A673 (cell line): ENCODE measurements at regions of chr1 and their contacts with region 1.

Region 1: DNA sequence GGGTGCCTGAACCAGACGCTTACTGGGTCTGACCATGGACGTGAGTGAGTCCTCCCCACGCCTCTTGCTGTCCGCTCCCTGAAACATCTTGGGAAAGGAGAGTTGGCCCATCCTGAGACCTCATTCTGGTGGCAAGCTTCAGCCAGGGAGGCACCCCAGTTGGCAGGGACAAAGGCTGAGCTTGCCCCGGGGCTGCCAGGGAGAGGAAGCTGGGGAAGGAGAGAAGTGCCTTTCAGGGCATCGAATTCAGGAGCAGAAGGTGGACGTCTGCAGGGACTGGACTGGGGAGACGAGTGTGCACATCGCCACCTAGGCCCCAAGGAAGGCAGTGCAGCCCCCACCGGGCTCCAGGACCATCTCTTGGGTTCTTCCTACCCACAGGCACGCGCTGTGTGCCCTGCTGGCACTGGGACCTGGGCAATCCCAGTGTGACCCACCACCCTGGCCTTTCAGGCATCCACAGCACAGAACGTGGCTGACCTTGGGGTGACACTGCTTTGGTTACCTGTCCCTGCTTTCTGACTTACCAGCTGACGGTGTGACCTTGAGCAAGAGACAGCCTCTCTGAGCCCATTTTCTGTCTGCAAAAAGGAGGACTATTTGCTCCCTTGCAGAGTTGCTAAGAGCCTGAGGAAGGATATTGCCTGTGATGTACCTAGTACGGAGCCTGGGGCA is 133.0 kb upstream of the WNT4 start:
- DNase-seq: peak; percentile 55
- H3K4me3 ChIP-seq: no peak overlapping the region
- H3K27ac ChIP-seq: no peak overlapping the region
- H3K4me1 ChIP-seq: no peaks in the 10 kb centered on the region
- H3K27me3 ChIP-seq: no peaks in the 10 kb centered on the region
- CTCF ChIP-seq: peak; percentile 78

Region 2: DNA sequence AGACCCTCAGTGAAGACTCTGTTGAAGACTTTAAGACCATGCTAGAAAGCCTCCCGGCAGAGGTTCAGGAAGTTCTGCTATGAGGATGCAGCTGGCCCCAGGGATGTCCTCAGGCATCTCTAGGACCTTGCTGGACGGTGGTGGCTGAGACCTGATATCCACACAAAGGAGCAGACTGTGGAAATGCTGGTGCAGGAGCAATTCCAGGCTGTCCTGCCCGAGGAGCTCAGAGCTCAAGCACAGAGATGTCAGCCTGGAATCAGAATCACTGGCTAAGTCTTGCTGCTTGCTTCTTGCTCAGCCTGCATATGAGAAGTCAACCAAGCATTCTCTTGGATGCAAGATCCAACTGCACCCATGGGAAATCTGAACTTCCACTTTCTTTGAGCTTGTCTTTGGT is 245.4 kb before region 1 on chr1:
- CTCF ChIA-PET with region 1: no interaction called
- POLR2A ChIA-PET with region 1: interaction called, 14 read pairs
- intact Hi-C with region 1: no loop called
- DNase-seq: no peak
- H3K4me3 ChIP-seq: no peak overlapping the region
- H3K27ac ChIP-seq: no peak overlapping the region
- H3K4me1 ChIP-seq: peaks cover 9% of the 10 kb centered on the region
- H3K27me3 ChIP-seq: no peaks in the 10 kb centered on the region
- CTCF ChIP-seq: no peak

Region 3: DNA sequence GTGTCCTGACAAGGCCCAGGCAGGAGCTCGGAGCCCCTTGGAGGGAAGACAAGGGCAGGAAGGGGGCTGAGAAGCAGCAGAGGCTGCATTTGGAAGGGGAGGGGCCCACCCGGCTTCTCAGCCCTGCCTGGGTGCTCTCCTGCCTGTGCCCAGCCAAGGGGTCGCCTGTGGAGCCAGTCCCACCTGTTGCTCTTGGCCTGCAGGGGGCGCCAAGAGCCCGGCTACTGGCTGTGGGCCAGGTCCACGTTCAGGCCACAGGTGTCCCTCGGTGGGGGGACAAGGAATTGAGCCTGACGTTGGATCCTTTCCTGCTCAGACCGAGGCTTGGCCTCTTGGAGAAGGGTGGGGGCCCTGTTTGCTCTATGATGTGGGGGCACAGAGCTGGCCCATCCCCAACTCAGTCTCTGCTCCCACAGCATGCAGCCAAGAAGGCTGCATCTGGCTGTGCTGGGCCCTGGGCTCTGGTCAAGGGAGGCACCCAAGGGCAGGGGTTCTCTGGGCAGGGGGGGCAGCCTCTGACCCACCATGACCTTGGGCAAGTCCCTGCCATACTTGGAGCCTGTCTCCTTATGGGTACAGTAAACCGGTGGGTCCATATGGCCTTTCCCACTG is 143.9 kb before region 1 on chr1:
- CTCF ChIA-PET with region 1: interaction called, 3 read pairs
- POLR2A ChIA-PET with region 1: no interaction called
- intact Hi-C with region 1: loop called (anchors 10 kb)
- DNase-seq: peak; percentile 41
- H3K4me3 ChIP-seq: no peak overlapping the region
- H3K27ac ChIP-seq: no peak overlapping the region
- H3K4me1 ChIP-seq: no peaks in the 10 kb centered on the region
- H3K27me3 ChIP-seq: no peaks in the 10 kb centered on the region
- CTCF ChIP-seq: peak; percentile 91

Region 4: GRCh38 chr1:22195802-22196440 is 79.9 kb before region 1 on chr1:
- CTCF ChIA-PET with region 1: no interaction called
- POLR2A ChIA-PET with region 1: interaction called, 11 read pairs
- intact Hi-C with region 1: no loop called
- DNase-seq: no peak
- H3K4me3 ChIP-seq: no peak overlapping the region
- H3K27ac ChIP-seq: no peak overlapping the region
- H3K4me1 ChIP-seq: no peaks in the 10 kb centered on the region
- H3K27me3 ChIP-seq: peaks cover 10% of the 10 kb centered on the region
- CTCF ChIP-seq: no peak

Region 5: GRCh38 chr1:22364764-22365163 is 88.9 kb after region 1 on chr1:
- CTCF ChIA-PET with region 1: no interaction called
- POLR2A ChIA-PET with region 1: no interaction called
- intact Hi-C with region 1: no loop called
- DNase-seq: no peak
- H3K4me3 ChIP-seq: no peak overlapping the region
- H3K27ac ChIP-seq: no peak overlapping the region
- H3K4me1 ChIP-seq: peaks cover 5% of the 10 kb centered on the region
- H3K27me3 ChIP-seq: peaks cover 7% of the 10 kb centered on the region
- CTCF ChIP-seq: no peak